Dorsolateral prefrontal cortex (tissue), 120 donors: ENCODE measurements at regions of chr17 and their contacts with region 1.

Region 1: GRCh38 chr17:82457997-82458864 is at the start of gene NARF:
- DNase-seq: peak; percentile 96 to 100 (median 98)
- H3K4me3 ChIP-seq: peak within 1 kb of the TSS; percentile 67 to 100 (median 93)
- H3K27ac ChIP-seq: peak within 1 kb of the TSS; percentile 97 to 100 (median 100)
- H3K27me3 ChIP-seq: no peaks in the 10 kb centered on the region
- CTCF ChIP-seq: peak in 15 of 56 donors; percentile 3 to 27 (median 12)
- total RNA-seq, gene NARF: 56.4 to 136 (median 81.0) TPM

Region 2: DNA sequence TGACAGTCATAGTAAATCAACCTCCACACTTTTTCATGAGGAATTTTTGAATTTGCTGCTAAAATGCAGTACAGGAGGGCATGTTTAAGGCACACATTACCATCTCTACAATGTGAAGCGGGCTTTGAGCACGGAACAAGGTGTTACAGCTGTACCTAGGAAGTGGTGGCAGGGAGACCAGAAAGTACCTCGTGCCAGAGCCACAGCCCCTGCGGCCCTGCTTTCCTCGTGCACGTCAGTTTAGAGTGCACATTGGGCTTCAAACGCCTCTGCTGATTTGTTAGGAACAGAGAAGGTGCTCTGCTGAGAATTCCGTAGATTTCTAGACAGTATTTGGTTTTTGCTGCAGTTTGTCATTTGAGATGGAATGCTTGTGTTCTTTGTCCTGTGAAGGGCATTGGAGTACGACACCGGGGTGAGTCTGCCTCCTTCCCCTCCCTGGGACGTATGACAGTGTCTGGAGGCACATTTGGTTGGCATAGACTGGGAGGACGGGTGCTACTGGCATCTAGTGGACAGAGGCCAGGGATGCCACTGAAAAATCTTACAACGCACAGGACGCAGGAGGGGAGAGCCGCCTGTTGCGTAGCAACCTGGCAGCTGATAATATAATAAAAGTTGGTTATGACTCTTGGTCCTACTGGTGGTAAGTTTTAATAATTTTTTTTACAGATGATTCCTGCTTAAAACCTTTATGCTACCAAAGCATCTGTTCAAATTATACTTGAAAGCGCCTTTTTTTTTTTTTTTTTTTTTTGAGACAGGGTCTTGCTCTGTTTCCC is 70.4 kb after region 1 on chr17:
- intact Hi-C with region 1: loop called in 1 of 2 experiments (anchors 10 kb)
- DNase-seq: peak in 9 of 10 donors; percentile 64 to 82 (median 70)
- H3K4me3 ChIP-seq: peak overlapping the region in 32 of 59 donors; percentile 2 to 50 (median 19)
- H3K27ac ChIP-seq: peak overlapping the region in 55 of 59 donors; percentile 8 to 84 (median 70)
- H3K27me3 ChIP-seq: no peaks in the 10 kb centered on the region
- CTCF ChIP-seq: peak in 55 of 56 donors; percentile 23 to 73 (median 57)